AG04450 (cell line): ENCODE measurements at regions of chr2 and their contacts with region 1.

Region 1: GRCh38 chr2:202577250-202578183 is 57.3 kb upstream of the FAM117B start:
- DNase-seq: no peak
- H3K4me3 ChIP-seq: no peak overlapping the region
- H3K27ac ChIP-seq: no peak overlapping the region
- H3K27me3 ChIP-seq: no peaks in the 10 kb centered on the region
- CTCF ChIP-seq: no peak

Region 2: DNA sequence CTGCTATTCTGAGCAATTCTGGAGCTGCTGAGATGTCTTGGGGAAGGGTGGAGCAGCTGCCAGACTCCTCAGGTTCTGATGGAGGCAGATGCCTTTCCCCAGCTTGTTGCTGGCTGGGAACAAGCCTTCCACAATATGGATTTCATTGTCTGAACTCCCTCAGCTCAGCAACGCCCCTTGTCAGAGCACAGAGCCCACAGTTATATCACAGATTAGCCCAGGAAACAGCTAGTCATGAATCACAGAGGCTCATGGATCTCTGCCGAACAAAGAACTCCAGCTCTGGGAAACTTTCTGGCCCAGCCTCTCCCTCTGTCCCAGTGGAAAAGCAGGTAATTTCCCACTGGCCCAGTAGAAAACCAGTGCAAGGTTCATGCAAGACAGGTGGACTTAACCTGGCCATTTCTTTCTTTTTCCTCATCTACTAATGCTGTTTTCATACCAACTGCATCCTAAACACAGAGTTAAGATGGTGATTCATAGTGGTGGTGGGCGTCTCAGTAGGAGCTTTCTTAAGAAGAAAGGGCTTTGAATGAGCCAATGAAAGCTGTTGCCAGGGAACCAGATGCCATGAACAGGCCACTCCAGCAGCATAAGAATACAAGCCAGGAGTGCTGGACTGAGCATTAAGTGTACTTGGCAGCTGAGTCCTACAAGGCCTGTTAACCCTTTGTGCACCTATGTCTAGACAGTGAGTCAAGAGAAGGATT is 513.2 kb before region 1 on chr2:
- CTCF ChIA-PET with region 1: no interaction called
- POLR2A ChIA-PET with region 1: no interaction called
- DNase-seq: peak; percentile 67
- H3K4me3 ChIP-seq: peak overlapping the region; percentile 27; the same call in 1 of the 2 replicates
- H3K27ac ChIP-seq: peak overlapping the region; percentile 89
- H3K27me3 ChIP-seq: no peaks in the 10 kb centered on the region
- CTCF ChIP-seq: no peak

Region 3: DNA sequence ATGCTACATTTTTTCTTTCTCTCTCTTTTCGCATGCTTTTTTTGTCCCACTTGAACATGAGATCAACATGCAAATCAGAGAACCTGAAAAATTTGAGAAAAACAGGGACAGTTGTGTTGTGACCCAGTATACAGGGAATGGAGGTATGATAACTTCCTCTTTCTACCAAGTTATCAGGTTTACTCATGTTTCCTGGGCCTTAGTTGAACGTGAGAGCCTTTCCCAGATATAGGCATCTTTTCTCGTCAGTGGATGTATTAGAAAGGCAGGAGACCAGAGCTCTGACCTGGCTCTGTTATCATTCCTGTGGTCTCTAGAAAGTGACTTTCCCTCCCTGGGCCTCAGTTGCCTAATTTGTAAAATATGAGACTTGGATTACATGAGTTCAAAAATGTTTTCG is 27.2 kb after region 1 on chr2:
- CTCF ChIA-PET with region 1: no interaction called
- POLR2A ChIA-PET with region 1: no interaction called
- DNase-seq: no peak
- H3K4me3 ChIP-seq: no peak overlapping the region
- H3K27ac ChIP-seq: no peak overlapping the region
- H3K27me3 ChIP-seq: no peaks in the 10 kb centered on the region
- CTCF ChIP-seq: no peak

Region 4: GRCh38 chr2:203195331-203196036 is 618.0 kb after region 1 on chr2:
- CTCF ChIA-PET with region 1: no interaction called
- POLR2A ChIA-PET with region 1: interaction called, 11 read pairs
- DNase-seq: no peak
- H3K4me3 ChIP-seq: no peak overlapping the region
- H3K27ac ChIP-seq: no peak overlapping the region
- H3K27me3 ChIP-seq: no peaks in the 10 kb centered on the region
- CTCF ChIP-seq: no peak

Region 5: GRCh38 chr2:203878063-203878462 is 1300.5 kb after region 1 on chr2:
- CTCF ChIA-PET with region 1: interaction called, 10 read pairs
- POLR2A ChIA-PET with region 1: no interaction called
- DNase-seq: no peak
- H3K4me3 ChIP-seq: no peak overlapping the region
- H3K27ac ChIP-seq: no peak overlapping the region
- H3K27me3 ChIP-seq: peaks cover 4% of the 10 kb centered on the region
- CTCF ChIP-seq: no peak